CD14-positive monocyte (primary cell): ENCODE measurements at regions of chr17 and their contacts with region 1.

Region 1: GRCh38 chr17:1716076-1716995 is 6.2 kb upstream of the TLCD2 start:
- DNase-seq: peak; percentile 100
- H3K4me3 ChIP-seq: peak overlapping the region; percentile 84 to 96 (median 92)
- H3K4me3 Mint-ChIP-seq: peak overlapping the region; percentile 92 to 93
- H3K27ac ChIP-seq: peak overlapping the region; percentile 97 to 98
- H3K27ac Mint-ChIP-seq: peak overlapping the region; percentile 98 to 99 (median 99)
- H3K4me1 ChIP-seq: peaks cover 34 to 41% of the 10 kb centered on the region in 2 donors
- H3K4me1 Mint-ChIP-seq: peaks cover 39% of the 10 kb centered on the region
- H3K27me3 ChIP-seq: peaks cover 0 to under 1% of the 10 kb centered on the region in 2 donors
- H3K27me3 Mint-ChIP-seq: peaks cover 4 to 20% (median 5%) of the 10 kb centered on the region in 3 donors
- CTCF ChIP-seq: no peak

Region 2: GRCh38 chr17:1617620-1618174 is 98.6 kb before region 1 on chr17:
- intact Hi-C with region 1: no loop called
- DNase-seq: peak; percentile 54 to 76 (median 74)
- H3K4me3 ChIP-seq: no peak overlapping the region
- H3K4me3 Mint-ChIP-seq: peak overlapping the region; percentile 47 to 62
- H3K27ac ChIP-seq: peak overlapping the region; percentile 38 to 47
- H3K27ac Mint-ChIP-seq: peak overlapping the region; percentile 15 to 93 (median 85)
- H3K4me1 ChIP-seq: peaks cover 39 to 52% of the 10 kb centered on the region in 2 donors
- H3K4me1 Mint-ChIP-seq: peaks cover 51% of the 10 kb centered on the region
- H3K27me3 ChIP-seq: no peaks in the 10 kb centered on the region
- H3K27me3 Mint-ChIP-seq: peaks cover 0 to 2% (median 0%) of the 10 kb centered on the region in 3 donors
- CTCF ChIP-seq: no peak

Region 3: GRCh38 chr17:1684378-1685189 is 31.8 kb before region 1 on chr17 and contains the start of gene PRPF8:
- intact Hi-C with region 1: loop called (anchors 2 to 5 kb)
- DNase-seq: peak; percentile 97 to 98 (median 97)
- H3K4me3 ChIP-seq: peak within 1 kb of the TSS; percentile 64 to 99 (median 94)
- H3K4me3 Mint-ChIP-seq: peak within 1 kb of the TSS; percentile 95 to 96
- H3K27ac ChIP-seq: peak within 1 kb of the TSS; percentile 79 to 89
- H3K27ac Mint-ChIP-seq: peak within 1 kb of the TSS; percentile 89 to 96 (median 94)
- H3K4me1 ChIP-seq: peaks cover 15 to 18% of the 10 kb centered on the region in 2 donors
- H3K4me1 Mint-ChIP-seq: peaks cover 17% of the 10 kb centered on the region
- H3K27me3 ChIP-seq: no peaks in the 10 kb centered on the region
- H3K27me3 Mint-ChIP-seq: peaks cover 0 to 1% (median 1%) of the 10 kb centered on the region in 3 donors
- CTCF ChIP-seq: no peak
- polyA plus RNA-seq, gene PRPF8: 53.3 to 128 (median 78.0) TPM

Region 4: DNA sequence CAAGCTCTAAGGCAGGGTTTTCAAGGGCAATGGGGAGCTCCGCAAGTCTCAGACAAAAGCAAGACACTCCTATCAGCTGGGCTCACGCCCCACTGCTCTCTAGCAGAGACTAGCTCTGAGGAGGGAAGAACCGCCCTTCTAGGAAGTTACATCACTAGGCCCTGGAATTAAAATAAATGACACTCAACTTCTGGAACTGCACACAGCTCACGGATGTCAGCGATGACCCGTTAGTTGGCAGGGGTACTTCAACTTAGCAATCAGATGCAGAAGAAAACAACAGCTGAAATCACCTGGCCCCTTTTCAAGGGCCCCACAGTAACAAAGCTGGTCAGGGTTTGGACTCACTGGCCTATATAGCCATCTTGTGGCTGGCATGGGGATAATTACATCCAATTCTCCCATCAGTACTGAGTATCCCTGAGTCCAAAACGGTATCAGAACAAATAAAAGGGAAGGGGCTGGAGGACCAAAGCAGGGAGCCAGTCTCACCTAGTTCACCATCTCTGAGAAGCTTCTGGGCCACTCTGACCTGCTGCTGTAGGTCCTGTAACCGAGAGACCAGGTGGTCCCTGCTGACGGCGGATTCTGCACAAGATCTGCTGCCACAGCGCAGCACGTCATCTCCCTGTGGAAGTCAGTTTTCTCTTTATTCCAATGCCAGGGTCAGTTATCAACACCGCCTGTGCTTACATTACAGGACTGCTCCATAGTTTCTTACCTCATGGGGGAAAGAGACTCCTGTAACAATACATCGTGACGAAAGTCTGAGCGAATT is 67.7 kb after region 1 on chr17:
- intact Hi-C with region 1: loop called (anchors 2 to 5 kb)
- DNase-seq: peak; percentile 84 to 86 (median 84)
- H3K4me3 ChIP-seq: peak overlapping the region; percentile 12 to 58 (median 15)
- H3K4me3 Mint-ChIP-seq: peak overlapping the region; percentile 71 to 85
- H3K27ac ChIP-seq: peak overlapping the region; percentile 93 to 97
- H3K27ac Mint-ChIP-seq: peak overlapping the region; percentile 97 to 99 (median 98)
- H3K4me1 ChIP-seq: peaks cover 27 to 29% of the 10 kb centered on the region in 2 donors
- H3K4me1 Mint-ChIP-seq: peaks cover 30% of the 10 kb centered on the region
- H3K27me3 ChIP-seq: no peaks in the 10 kb centered on the region
- H3K27me3 Mint-ChIP-seq: peaks cover 0 to 5% (median 1%) of the 10 kb centered on the region in 3 donors
- CTCF ChIP-seq: peak; percentile 76

Region 5: GRCh38 chr17:1829592-1830257 is 113.4 kb after region 1 on chr17 and contains the starts of genes RPA1 and SMYD4:
- intact Hi-C with region 1: loop called (anchors 5 to 10 kb)
- DNase-seq: peak; percentile 73 to 84 (median 78)
- H3K4me3 ChIP-seq: peak within 1 kb of the TSS; percentile 70 to 97 (median 97)
- H3K4me3 Mint-ChIP-seq: peak within 1 kb of the TSS; percentile 80 to 95
- H3K27ac ChIP-seq: peak within 1 kb of the TSS in 1 of 2 donors; percentile 81
- H3K27ac Mint-ChIP-seq: peak within 1 kb of the TSS; percentile 66 to 94 (median 88)
- H3K4me1 ChIP-seq: peaks cover 22 to 23% of the 10 kb centered on the region in 2 donors
- H3K4me1 Mint-ChIP-seq: peaks cover 36% of the 10 kb centered on the region
- H3K27me3 ChIP-seq: no peaks in the 10 kb centered on the region
- H3K27me3 Mint-ChIP-seq: peaks cover 0 to 2% (median 0%) of the 10 kb centered on the region in 3 donors
- CTCF ChIP-seq: no peak
- polyA plus RNA-seq, gene RPA1: 18.5 to 27.4 (median 23.8) TPM
- polyA plus RNA-seq, gene SMYD4: 3.2 to 7.6 (median 6.1) TPM

Region 6: DNA sequence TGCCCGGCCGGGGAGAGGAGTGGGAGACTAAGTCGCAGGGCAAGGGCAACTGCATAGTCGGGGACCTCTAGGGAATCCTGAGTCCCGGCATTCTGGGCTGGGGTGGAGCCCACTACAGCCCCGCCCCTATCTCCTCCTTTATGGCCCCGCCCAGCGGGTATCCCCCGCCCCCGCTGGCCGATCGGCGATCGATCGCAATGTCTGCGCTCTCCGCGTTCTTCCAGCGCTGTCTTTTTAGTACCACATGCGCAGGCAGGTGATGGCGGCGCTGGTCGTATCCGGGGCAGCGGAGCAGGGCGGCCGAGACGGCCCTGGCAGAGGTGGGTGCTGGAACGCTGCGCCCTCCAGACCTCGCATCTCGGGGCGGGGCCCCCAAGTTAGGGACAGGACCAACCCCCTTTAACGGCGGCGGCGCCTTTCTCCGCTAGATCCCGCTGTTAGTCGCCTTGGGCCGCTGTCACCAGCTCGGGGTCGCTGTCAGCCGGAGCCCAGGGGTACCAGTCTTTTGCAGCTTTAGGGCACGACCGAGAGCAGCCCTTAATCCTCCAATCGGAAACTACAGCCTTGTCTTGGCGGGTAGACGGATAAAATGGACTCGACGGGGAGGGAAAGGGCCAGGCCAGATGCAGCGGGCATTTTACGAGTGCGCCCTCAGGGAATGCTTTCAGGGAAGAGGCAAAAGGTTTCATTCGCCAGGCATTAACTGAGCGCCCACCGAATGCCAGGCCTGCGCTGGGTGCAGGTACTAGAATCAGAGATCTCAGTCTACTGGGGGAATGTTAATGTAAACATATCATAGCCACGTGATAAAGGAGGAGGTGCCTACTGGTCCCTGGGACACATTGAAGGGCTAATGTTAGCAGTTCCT is 313.8 kb after region 1 on chr17 and contains the start of gene DPH1:
- intact Hi-C with region 1: loop called in 1 of 2 experiments (anchors 10 kb)
- DNase-seq: peak; percentile 73 to 77 (median 77)
- H3K4me3 ChIP-seq: peak within 1 kb of the TSS; percentile 66 to 99 (median 91)
- H3K4me3 Mint-ChIP-seq: peak within 1 kb of the TSS; percentile 95 to 97
- H3K27ac ChIP-seq: peak within 1 kb of the TSS in 1 of 2 donors; percentile 36
- H3K27ac Mint-ChIP-seq: peak within 1 kb of the TSS; percentile 54 to 87 (median 80)
- H3K4me1 ChIP-seq: peaks cover 26 to 33% of the 10 kb centered on the region in 2 donors
- H3K4me1 Mint-ChIP-seq: peaks cover 27% of the 10 kb centered on the region
- H3K27me3 ChIP-seq: peaks cover 22 to 46% of the 10 kb centered on the region in 2 donors
- H3K27me3 Mint-ChIP-seq: peaks cover 46 to 49% (median 47%) of the 10 kb centered on the region in 3 donors
- CTCF ChIP-seq: no peak
- polyA plus RNA-seq, gene DPH1: 7.5 to 29.4 (median 9.3) TPM

Region 7: DNA sequence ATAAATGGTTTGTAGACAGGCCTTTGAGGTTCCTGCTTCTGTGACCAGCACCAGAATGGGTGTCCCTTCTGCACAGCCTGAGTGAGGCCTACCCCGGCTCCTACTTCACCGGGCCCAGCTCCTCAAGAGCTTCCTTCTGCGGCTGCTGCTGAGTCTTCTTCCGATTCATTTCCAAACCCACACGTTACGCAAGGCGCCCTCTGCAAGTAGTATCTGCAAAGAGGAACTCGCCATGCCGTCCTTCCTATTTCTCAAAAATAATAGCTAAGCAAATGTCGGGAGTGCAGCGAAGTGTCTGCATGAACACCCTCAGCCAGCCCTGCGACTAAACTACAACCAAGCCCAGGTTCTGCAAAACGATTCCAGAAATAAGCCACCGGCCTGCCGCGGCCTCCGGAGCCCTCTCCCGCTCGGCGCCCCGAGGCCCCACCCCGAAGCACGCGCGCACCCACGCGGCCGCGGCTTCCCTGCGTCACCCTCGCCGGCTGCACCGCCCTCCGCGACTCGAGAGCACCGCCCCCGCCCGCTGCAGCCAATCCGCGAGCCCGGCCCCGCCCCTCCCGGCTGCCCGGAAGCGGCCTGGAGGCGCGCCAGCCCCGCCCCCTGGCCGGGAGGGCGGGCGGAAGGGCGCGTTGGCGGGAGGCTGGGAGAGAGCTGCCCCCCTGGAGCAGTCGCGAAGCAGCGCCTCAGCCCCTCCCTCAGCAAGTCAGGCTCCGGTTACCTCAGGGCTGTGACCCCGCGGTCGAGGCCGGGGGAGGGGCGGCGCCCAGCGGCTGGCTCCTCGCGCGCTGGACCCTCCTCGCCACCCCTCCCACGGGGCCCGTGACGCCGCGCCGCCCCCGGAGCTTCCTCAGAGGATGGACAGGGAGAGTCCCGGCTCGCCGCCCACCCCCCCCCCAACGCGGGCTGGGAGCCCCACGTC is 676.2 kb after region 1 on chr17:
- intact Hi-C with region 1: loop called in 1 of 2 experiments (anchors 5 kb)
- DNase-seq: peak; percentile 93 to 98 (median 97)
- H3K4me3 ChIP-seq: peak overlapping the region; percentile 63 to 98 (median 73)
- H3K4me3 Mint-ChIP-seq: peak overlapping the region; percentile 85 to 87
- H3K27ac ChIP-seq: peak overlapping the region; percentile 95 to 99
- H3K27ac Mint-ChIP-seq: peak overlapping the region; percentile 98 to 100 (median 99)
- H3K4me1 ChIP-seq: peaks cover 56 to 65% of the 10 kb centered on the region in 2 donors
- H3K4me1 Mint-ChIP-seq: peaks cover 54% of the 10 kb centered on the region
- H3K27me3 ChIP-seq: no peaks in the 10 kb centered on the region
- H3K27me3 Mint-ChIP-seq: peaks cover 0 to 2% (median 2%) of the 10 kb centered on the region in 3 donors
- CTCF ChIP-seq: no peak